ENCODE measurements at regions of chr6 and their contacts with region 1.

Region 1: DNA sequence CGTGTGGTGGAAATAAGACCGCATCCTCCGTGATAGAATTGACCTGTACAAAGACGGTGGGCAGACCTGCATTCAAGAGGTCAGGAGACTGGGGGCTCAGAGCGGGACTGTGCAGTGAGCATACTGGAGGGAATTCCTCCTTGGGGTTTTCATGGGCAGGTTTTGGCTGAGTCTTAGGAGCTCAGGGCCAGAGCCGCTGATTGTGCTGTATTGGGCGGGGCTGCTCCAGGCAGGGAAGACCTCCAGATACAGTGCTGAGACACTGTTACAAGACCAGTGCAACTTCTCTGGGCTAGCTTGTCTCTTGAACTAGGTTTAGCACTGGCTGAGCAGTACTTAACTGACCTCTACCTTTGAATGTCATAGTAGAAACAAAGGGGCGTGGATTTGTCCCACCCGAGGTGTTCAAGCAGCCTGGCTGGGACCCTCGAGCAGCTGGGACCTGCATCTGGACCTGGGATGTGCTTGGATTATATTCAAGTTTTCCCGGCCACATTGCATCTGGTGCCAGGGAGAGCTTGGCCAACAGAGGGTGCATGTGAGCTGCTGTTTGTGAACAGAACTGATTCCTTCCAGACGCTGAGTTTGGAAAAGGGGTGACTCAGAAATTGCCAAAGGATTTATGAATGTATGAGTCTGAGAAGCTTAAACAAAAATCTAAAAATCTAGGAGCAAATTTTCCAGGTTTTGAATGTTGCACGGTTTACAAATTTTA is 33.4 kb upstream of the SLC22A1 start:
- DNase-seq: peak; percentile 33
- ATAC-seq: peak; percentile 72
- H3K4me3 ChIP-seq: no peak overlapping the region
- H3K27ac ChIP-seq: no peak overlapping the region
- H3K4me1 ChIP-seq: peaks cover 11% of the 10 kb centered on the region
- H3K27me3 ChIP-seq: no peaks in the 10 kb centered on the region
- CTCF ChIP-seq: peak; percentile 86
- EP300 ChIP-seq: no peak
- POLR2A ChIP-seq: no peak
- RAD21 ChIP-seq: peak; percentile 68

Region 2: GRCh38 chr6:160069050-160069454 is 19.2 kb before region 1 on chr6:
- CTCF ChIA-PET with region 1: no interaction called
- POLR2A ChIA-PET with region 1: no interaction called
- in situ Hi-C with region 1: no loop called
- intact Hi-C with region 1: no loop called
- DNase-seq: no peak
- ATAC-seq: no peak
- H3K4me3 ChIP-seq: no peak overlapping the region
- H3K27ac ChIP-seq: no peak overlapping the region
- H3K4me1 ChIP-seq: peaks cover 8% of the 10 kb centered on the region
- H3K27me3 ChIP-seq: no peaks in the 10 kb centered on the region
- CTCF ChIP-seq: no peak
- EP300 ChIP-seq: no peak
- POLR2A ChIP-seq: no peak
- RAD21 ChIP-seq: no peak

Region 3: GRCh38 chr6:160102956-160103824 is 15.0 kb after region 1 on chr6:
- CTCF ChIA-PET with region 1: no interaction called
- POLR2A ChIA-PET with region 1: no interaction called
- in situ Hi-C with region 1: no loop called
- intact Hi-C with region 1: loop called (anchors 2 kb)
- DNase-seq: peak; percentile 45
- ATAC-seq: peak; percentile 53
- H3K4me3 ChIP-seq: no peak overlapping the region
- H3K27ac ChIP-seq: no peak overlapping the region
- H3K4me1 ChIP-seq: peaks cover 34% of the 10 kb centered on the region
- H3K27me3 ChIP-seq: no peaks in the 10 kb centered on the region
- CTCF ChIP-seq: peak; percentile 53
- EP300 ChIP-seq: no peak
- POLR2A ChIP-seq: no peak
- RAD21 ChIP-seq: peak; percentile 32; the same call in 1 of the 2 replicates

Region 4: DNA sequence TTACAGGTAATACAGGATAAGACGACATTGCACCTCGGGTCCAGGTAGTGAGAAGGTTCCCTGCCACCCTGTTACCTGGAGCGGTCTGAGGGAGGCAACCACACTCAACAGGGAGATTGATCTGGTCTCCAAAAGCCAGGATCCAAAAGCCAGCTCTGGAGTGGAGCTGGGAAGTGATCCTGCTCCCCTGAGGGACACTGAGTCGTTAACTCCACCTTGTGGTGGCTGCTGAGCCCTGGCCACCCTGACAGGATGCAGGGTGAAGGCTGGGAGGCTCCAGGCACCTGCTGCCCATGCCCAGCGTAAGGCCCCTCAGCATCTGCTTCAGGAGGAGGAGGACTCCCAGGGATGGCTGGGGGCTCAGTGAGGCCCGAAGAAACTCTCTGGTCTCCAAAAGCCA is 209.1 kb after region 1 on chr6:
- CTCF ChIA-PET with region 1: no interaction called
- POLR2A ChIA-PET with region 1: no interaction called
- in situ Hi-C with region 1: no loop called
- intact Hi-C with region 1: loop called (anchors 1 kb)
- DNase-seq: peak; percentile 14
- ATAC-seq: peak; percentile 92
- H3K4me3 ChIP-seq: no peak overlapping the region
- H3K27ac ChIP-seq: no peak overlapping the region
- H3K4me1 ChIP-seq: peaks cover 14% of the 10 kb centered on the region
- H3K27me3 ChIP-seq: no peaks in the 10 kb centered on the region
- CTCF ChIP-seq: peak; percentile 77
- EP300 ChIP-seq: no peak
- POLR2A ChIP-seq: no peak
- RAD21 ChIP-seq: peak; percentile 37

Region 5: DNA sequence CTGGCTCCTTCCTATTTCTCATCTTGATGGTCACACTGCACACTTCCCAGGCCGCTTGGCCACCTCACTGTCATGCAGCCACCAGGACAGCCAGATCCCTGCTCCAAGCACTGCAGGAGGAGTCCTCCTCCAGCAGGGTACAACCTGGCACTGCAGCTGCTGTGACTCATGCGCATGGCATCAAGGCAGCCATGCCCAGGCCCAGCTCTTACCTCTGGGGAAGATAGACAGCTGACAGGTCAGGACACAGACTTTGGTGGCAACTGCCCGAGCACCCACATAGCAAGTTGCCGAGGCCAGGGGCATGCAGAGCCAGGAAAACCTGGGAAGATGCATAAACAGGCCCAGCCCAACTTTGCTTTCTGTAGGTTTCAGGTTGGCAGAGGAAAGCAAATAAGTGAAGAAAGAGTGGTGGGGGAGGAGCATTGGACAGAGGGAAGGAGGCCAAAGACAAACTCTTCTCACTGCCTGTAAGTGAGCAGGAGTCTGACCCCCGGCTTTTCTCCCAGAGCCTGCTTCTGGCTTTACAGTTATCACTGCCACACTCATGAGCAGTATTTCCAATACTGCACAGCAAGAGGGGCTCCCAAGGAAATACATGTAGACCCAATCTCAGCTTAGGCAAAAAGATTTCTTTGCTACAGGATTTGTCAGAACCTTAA is 298.8 kb after region 1 on chr6:
- CTCF ChIA-PET with region 1: no interaction called
- POLR2A ChIA-PET with region 1: no interaction called
- in situ Hi-C with region 1: no loop called
- intact Hi-C with region 1: no loop called
- DNase-seq: no peak
- ATAC-seq: peak; percentile 41
- H3K4me3 ChIP-seq: no peak overlapping the region
- H3K27ac ChIP-seq: no peak overlapping the region
- H3K4me1 ChIP-seq: peaks cover 34% of the 10 kb centered on the region
- H3K27me3 ChIP-seq: no peaks in the 10 kb centered on the region
- CTCF ChIP-seq: no peak
- EP300 ChIP-seq: no peak
- POLR2A ChIP-seq: no peak
- RAD21 ChIP-seq: no peak

Region 6: GRCh38 chr6:160455541-160456213 is 367.5 kb after region 1 on chr6:
- CTCF ChIA-PET with region 1: interaction called, 22 read pairs
- POLR2A ChIA-PET with region 1: no interaction called
- in situ Hi-C with region 1: loop called (anchors 5 kb)
- intact Hi-C with region 1: loop called (anchors 1 kb)
- DNase-seq: peak; percentile 62
- ATAC-seq: peak; percentile 86
- H3K4me3 ChIP-seq: no peak overlapping the region
- H3K27ac ChIP-seq: no peak overlapping the region
- H3K4me1 ChIP-seq: peaks cover 8% of the 10 kb centered on the region
- H3K27me3 ChIP-seq: no peaks in the 10 kb centered on the region
- CTCF ChIP-seq: peak; percentile 100
- EP300 ChIP-seq: no peak
- POLR2A ChIP-seq: no peak
- RAD21 ChIP-seq: peak; percentile 97

Region 7: GRCh38 chr6:160534050-160534696 is 445.9 kb after region 1 on chr6:
- CTCF ChIA-PET with region 1: no interaction called
- POLR2A ChIA-PET with region 1: no interaction called
- in situ Hi-C with region 1: no loop called
- intact Hi-C with region 1: loop called (anchors 1 kb)
- DNase-seq: peak; percentile 52
- ATAC-seq: peak; percentile 96
- H3K4me3 ChIP-seq: no peak overlapping the region
- H3K27ac ChIP-seq: no peak overlapping the region
- H3K4me1 ChIP-seq: peaks cover 4% of the 10 kb centered on the region; the same call in 1 of the 2 replicates
- H3K27me3 ChIP-seq: no peaks in the 10 kb centered on the region
- CTCF ChIP-seq: peak; percentile 97
- EP300 ChIP-seq: no peak
- POLR2A ChIP-seq: no peak
- RAD21 ChIP-seq: peak; percentile 89

Measured in HepG2 (cell line).